Activated CD4-positive, alpha-beta T cell treated with anti-CD3 and anti-CD28 coated beads for 36 hours (primary cell): ENCODE measurements at regions of chr17 and their contacts with region 1.

Region 1: GRCh38 chr17:56499799-56500388 is 93.6 kb upstream of the NOG start:
- DNase-seq: peak; percentile 45
- ATAC-seq: no peak
- H3K4me3 Mint-ChIP-seq: no peak overlapping the region
- H3K27ac Mint-ChIP-seq: no peak overlapping the region
- H3K4me1 Mint-ChIP-seq: no peaks in the 10 kb centered on the region
- H3K27me3 Mint-ChIP-seq: no peaks in the 10 kb centered on the region

Region 2: GRCh38 chr17:56510554-56511342 is 10.9 kb after region 1 on chr17:
- CTCF ChIA-PET with region 1: interaction called, 19 read pairs
- POLR2A ChIA-PET with region 1: no interaction called
- intact Hi-C with region 1: no loop called
- DNase-seq: no peak
- ATAC-seq: no peak
- H3K4me3 Mint-ChIP-seq: no peak overlapping the region
- H3K27ac Mint-ChIP-seq: no peak overlapping the region
- H3K4me1 Mint-ChIP-seq: no peaks in the 10 kb centered on the region
- H3K27me3 Mint-ChIP-seq: peaks cover 2% of the 10 kb centered on the region